ENCODE measurements at regions of chr2 and their contacts with region 1.

Region 1: GRCh38 chr2:69755862-69756467 is 14.0 kb downstream of the ANXA4 start:
- DNase-seq: no peak
- ATAC-seq: no peak
- H3K4me3 Mint-ChIP-seq: no peak overlapping the region
- H3K27ac Mint-ChIP-seq: no peak overlapping the region
- H3K4me1 Mint-ChIP-seq: peaks cover 17% of the 10 kb centered on the region
- H3K27me3 Mint-ChIP-seq: no peaks in the 10 kb centered on the region
- CTCF ChIP-seq: no peak

Region 2: GRCh38 chr2:68548396-68548795 is 1207.6 kb before region 1 on chr2:
- CTCF ChIA-PET with region 1: no interaction called
- POLR2A ChIA-PET with region 1: no interaction called
- intact Hi-C with region 1: no loop called
- DNase-seq: no peak
- ATAC-seq: no peak
- H3K4me3 Mint-ChIP-seq: no peak overlapping the region
- H3K27ac Mint-ChIP-seq: no peak overlapping the region
- H3K4me1 Mint-ChIP-seq: no peaks in the 10 kb centered on the region
- H3K27me3 Mint-ChIP-seq: no peaks in the 10 kb centered on the region
- CTCF ChIP-seq: no peak

Region 3: GRCh38 chr2:69774984-69775982 is 19.3 kb after region 1 on chr2:
- CTCF ChIA-PET with region 1: interaction called, 3 read pairs
- POLR2A ChIA-PET with region 1: interaction called, 8 read pairs
- intact Hi-C with region 1: loop called (anchors 2 kb)
- DNase-seq: no peak
- ATAC-seq: peak; percentile 81
- H3K4me3 Mint-ChIP-seq: peak overlapping the region; percentile 67
- H3K27ac Mint-ChIP-seq: peak overlapping the region; percentile 86
- H3K4me1 Mint-ChIP-seq: peaks cover 68% of the 10 kb centered on the region
- H3K27me3 Mint-ChIP-seq: no peaks in the 10 kb centered on the region
- CTCF ChIP-seq: no peak

Region 4: GRCh38 chr2:69789175-69789721 is 33.3 kb after region 1 on chr2:
- CTCF ChIA-PET with region 1: no interaction called
- POLR2A ChIA-PET with region 1: interaction called, 12 read pairs
- intact Hi-C with region 1: no loop called
- DNase-seq: no peak
- ATAC-seq: peak; percentile 26
- H3K4me3 Mint-ChIP-seq: peak overlapping the region; percentile 21
- H3K27ac Mint-ChIP-seq: peak overlapping the region; percentile 37
- H3K4me1 Mint-ChIP-seq: peaks cover 41% of the 10 kb centered on the region
- H3K27me3 Mint-ChIP-seq: no peaks in the 10 kb centered on the region
- CTCF ChIP-seq: no peak

Measured in activated B cell treated with CpG ODN at 0.5 μM for 24 hours (primary cell).